Activated CD4-positive, alpha-beta T cell treated with anti-CD3 and anti-CD28 coated beads, Interleukin-2, amount 10 ng/mL, durations not matched to agents 24 days and 14 days (primary cell): ENCODE measurements at regions of chr4 and their contacts with region 1.

Region 1: GRCh38 chr4:54064295-54065111 is at the start of gene CHIC2:
- DNase-seq: peak; percentile 99
- H3K4me3 Mint-ChIP-seq: peak within 1 kb of the TSS; percentile 96
- H3K27ac Mint-ChIP-seq: peak within 1 kb of the TSS; percentile 92
- H3K4me1 Mint-ChIP-seq: peaks cover 33% of the 10 kb centered on the region
- H3K27me3 Mint-ChIP-seq: peaks cover 3% of the 10 kb centered on the region
- total RNA-seq, gene CHIC2: 20.0 and 23.8 TPM in 2 replicates

Region 2: DNA sequence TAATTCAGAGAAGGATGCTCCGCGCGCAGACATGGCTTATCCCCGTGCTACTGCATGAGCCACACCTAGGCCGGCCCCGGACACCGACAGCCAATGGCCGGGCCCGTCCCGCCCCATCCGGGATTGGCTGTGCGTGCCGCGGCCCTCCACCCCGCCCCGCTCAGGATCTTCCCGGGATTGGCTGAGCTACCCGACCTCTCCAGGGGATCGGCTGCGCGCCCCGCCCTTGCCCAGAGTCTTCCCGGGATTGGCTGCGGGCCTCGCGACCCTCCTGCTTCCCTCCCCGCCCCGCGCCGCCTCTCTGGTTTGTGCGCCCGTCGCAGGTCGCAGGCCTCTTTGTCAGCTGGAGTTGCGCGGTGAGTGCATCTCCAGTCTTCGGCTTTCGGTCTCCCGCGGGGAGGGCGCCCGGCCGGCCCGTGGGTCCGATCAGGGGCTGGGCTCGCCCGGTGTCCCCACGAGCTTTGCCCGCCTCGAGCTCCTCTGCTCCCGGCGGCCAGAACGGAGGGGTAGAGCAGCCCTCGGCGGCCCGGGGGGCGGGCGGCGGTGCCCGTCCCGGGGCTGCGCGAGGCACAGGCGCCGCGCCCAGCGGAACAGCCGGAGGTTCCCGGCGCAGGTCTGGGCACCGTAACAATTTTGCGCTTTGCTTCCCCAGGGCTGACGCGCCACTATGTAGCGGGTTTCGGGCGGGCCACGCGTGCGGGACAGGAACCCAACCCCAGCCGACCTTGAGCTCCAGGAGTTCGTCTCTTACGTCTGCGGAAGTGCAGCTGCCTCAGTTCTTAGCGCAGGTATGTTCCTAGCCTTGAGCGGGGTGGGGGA is 1352.1 kb before region 1 on chr4:
- intact Hi-C with region 1: loop called (anchors 5 kb)
- DNase-seq: peak; percentile 99
- H3K4me3 Mint-ChIP-seq: peak overlapping the region; percentile 98
- H3K27ac Mint-ChIP-seq: peak overlapping the region; percentile 99
- H3K4me1 Mint-ChIP-seq: peaks cover 48% of the 10 kb centered on the region
- H3K27me3 Mint-ChIP-seq: no peaks in the 10 kb centered on the region

Region 3: DNA sequence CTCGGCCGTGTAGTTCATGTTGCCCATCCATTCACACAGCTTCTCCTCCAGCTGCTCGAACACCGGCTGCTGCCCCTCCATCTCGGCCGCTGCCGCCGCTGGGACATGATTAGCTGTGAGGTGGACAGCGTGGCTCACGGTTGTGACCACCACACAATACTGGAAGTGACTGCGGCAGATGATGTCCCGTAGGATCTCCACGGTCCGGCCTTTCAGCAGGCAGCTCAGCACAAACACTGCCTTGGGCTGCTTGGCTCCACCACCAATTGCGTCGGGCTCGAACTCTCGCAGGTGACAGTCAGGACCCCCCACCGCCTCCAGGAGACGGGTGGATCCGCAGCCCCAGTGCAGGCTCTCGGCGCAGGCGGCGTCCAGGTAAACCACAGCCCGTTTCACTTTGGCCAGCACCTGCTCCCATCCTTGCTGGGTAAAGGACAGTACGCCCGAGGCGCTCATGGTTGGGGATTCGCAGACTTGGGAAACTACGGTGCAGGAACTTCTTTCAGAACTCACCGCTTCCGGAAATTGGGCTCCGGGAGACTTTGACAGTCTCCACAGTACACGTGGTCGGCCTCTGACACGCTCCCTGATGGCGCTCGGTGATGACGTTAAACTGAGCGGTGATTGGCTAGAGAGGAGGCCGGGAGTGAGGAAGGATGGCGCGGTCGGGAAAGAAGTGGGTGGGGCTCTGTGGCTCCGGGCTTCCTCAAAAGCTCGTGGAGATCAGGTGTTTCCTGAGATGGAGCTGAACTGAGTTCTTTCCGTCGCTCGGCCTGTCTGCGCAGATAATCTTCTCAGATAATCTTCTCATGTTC is 698.8 kb before region 1 on chr4 and contains the start of gene SCFD2:
- intact Hi-C with region 1: loop called (anchors 1 kb)
- DNase-seq: peak; percentile 99
- H3K4me3 Mint-ChIP-seq: peak within 1 kb of the TSS; percentile 98
- H3K27ac Mint-ChIP-seq: peak within 1 kb of the TSS; percentile 95
- H3K4me1 Mint-ChIP-seq: peaks cover 33% of the 10 kb centered on the region
- H3K27me3 Mint-ChIP-seq: peaks cover 15% of the 10 kb centered on the region
- total RNA-seq, gene SCFD2: 35.0 and 39.9 TPM in 2 replicates

Region 4: GRCh38 chr4:53537606-53538005 is 526.9 kb before region 1 on chr4:
- intact Hi-C with region 1: no loop called
- DNase-seq: no peak
- H3K4me3 Mint-ChIP-seq: no peak overlapping the region
- H3K27ac Mint-ChIP-seq: no peak overlapping the region
- H3K4me1 Mint-ChIP-seq: no peaks in the 10 kb centered on the region
- H3K27me3 Mint-ChIP-seq: peaks cover 7% of the 10 kb centered on the region

Region 5: GRCh38 chr4:53967986-53968385 is 96.5 kb before region 1 on chr4:
- intact Hi-C with region 1: no loop called
- DNase-seq: no peak
- H3K4me3 Mint-ChIP-seq: no peak overlapping the region
- H3K27ac Mint-ChIP-seq: no peak overlapping the region
- H3K4me1 Mint-ChIP-seq: no peaks in the 10 kb centered on the region
- H3K27me3 Mint-ChIP-seq: peaks cover 2% of the 10 kb centered on the region

Region 6: GRCh38 chr4:53997901-53998300 is 66.6 kb before region 1 on chr4:
- intact Hi-C with region 1: loop called (anchors 5 kb)
- DNase-seq: no peak
- H3K4me3 Mint-ChIP-seq: no peak overlapping the region
- H3K27ac Mint-ChIP-seq: no peak overlapping the region
- H3K4me1 Mint-ChIP-seq: no peaks in the 10 kb centered on the region
- H3K27me3 Mint-ChIP-seq: no peaks in the 10 kb centered on the region

Region 7: DNA sequence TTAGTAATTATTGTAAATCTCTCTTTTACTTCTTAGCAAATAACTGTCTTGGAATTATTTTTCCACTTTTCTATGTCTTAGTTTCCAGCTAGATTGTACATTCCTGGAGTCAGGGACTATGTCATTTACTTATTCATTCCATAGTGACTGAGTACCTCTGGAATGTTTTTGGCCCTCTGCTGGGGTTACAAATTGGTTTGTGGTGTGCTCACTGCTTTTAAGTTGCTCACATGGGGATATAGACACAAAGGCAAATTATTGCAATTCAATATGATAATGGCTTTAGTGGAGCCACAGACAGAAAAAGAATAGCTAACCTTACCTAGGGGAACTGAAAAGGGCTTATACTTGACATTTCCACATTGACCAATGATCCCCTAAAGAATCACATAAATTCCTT is 100.9 kb after region 1 on chr4:
- intact Hi-C with region 1: no loop called
- DNase-seq: no peak
- H3K4me3 Mint-ChIP-seq: no peak overlapping the region
- H3K27ac Mint-ChIP-seq: no peak overlapping the region
- H3K4me1 Mint-ChIP-seq: no peaks in the 10 kb centered on the region
- H3K27me3 Mint-ChIP-seq: no peaks in the 10 kb centered on the region

Region 8: GRCh38 chr4:54217642-54218495 is 153.4 kb after region 1 on chr4:
- intact Hi-C with region 1: no loop called
- DNase-seq: peak; percentile 87
- H3K4me3 Mint-ChIP-seq: peak overlapping the region; percentile 49
- H3K27ac Mint-ChIP-seq: no peak overlapping the region
- H3K4me1 Mint-ChIP-seq: peaks cover 4% of the 10 kb centered on the region
- H3K27me3 Mint-ChIP-seq: peaks cover 26% of the 10 kb centered on the region

Region 9: DNA sequence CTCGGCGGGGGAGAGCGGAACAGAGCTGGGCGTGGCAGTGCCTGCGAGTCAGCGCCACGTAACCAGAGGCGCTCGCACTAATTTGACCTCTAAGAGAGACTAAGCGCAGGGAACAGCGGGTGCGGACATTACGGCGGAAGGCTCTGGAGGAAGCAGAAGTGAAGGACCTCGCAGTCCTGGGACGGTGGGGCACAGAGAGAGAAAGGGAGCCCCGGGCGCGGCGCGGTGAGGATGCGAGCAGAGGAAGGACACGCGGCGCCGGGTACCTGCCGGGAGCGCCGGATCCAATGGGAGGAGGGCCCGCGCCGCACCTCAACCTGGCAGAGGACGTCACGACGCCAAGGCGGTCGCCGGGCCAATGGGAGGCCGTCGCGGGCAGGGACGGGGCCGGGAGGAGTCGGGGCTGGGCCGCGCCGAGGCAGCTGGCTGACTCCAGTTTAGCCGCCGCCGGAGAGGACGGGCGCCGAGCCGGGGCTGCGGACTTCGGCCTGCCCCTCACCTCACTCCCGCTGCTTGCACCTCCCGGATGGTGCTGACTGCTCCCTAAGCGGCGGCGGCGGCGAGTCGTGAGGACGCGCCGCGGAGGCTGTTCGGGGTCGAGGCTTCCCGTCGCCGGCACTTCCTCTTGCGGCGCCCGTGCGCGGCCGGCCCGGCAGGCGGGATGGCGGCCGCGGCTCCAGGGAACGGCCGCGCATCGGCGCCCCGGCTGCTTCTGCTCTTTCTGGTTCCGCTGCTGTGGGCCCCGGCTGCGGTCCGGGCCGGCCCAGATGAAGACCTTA is 1331.2 kb after region 1 on chr4 and contains the start of gene TMEM165:
- intact Hi-C with region 1: loop called (anchors 5 kb)
- DNase-seq: peak; percentile 97
- H3K4me3 Mint-ChIP-seq: peak within 1 kb of the TSS; percentile 100
- H3K27ac Mint-ChIP-seq: peak within 1 kb of the TSS; percentile 97
- H3K4me1 Mint-ChIP-seq: peaks cover 33% of the 10 kb centered on the region
- H3K27me3 Mint-ChIP-seq: no peaks in the 10 kb centered on the region
- total RNA-seq, gene TMEM165: 87.2 and 99.1 TPM in 2 replicates